Breast epithelium (tissue), 4 donors: ENCODE measurements at regions of chr5 and their contacts with region 1.

Region 1: GRCh38 chr5:106797996-106798395 is 872.7 kb downstream of the EFNA5 start:
- DNase-seq: no peak
- H3K4me3 ChIP-seq: no peak overlapping the region
- H3K27ac ChIP-seq: no peak overlapping the region
- H3K4me1 ChIP-seq: no peaks in the 10 kb centered on the region
- H3K27me3 ChIP-seq: no peaks in the 10 kb centered on the region
- CTCF ChIP-seq: no peak
- POLR2A ChIP-seq: no peak

Region 2: GRCh38 chr5:106367263-106367662 is 430.7 kb before region 1 on chr5:
- intact Hi-C with region 1: no loop called
- DNase-seq: no peak
- H3K4me3 ChIP-seq: no peak overlapping the region
- H3K27ac ChIP-seq: no peak overlapping the region
- H3K4me1 ChIP-seq: no peaks in the 10 kb centered on the region
- H3K27me3 ChIP-seq: no peaks in the 10 kb centered on the region
- CTCF ChIP-seq: no peak
- POLR2A ChIP-seq: no peak

Region 3: DNA sequence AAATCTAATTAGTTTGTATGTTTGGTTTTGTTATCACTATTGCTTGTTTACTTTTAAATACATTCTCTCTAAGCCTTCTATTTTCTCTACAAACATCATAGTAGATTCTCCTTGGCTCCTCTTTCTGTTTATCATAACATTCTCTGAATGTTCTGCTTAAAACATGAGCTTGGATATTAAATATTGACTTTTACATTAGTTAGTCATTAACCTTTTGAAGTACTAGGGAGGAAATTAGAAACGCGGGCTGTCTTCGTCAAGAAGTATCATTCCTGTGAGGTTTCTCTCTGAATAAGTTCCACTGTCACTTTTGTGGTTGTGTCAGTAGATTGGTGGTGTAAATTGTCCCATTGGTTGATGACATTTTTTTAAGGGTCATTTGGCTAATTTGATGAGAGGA is 51.3 kb after region 1 on chr5:
- intact Hi-C with region 1: loop called (anchors 5 kb)
- DNase-seq: no peak
- H3K4me3 ChIP-seq: no peak overlapping the region
- H3K27ac ChIP-seq: no peak overlapping the region
- H3K4me1 ChIP-seq: no peaks in the 10 kb centered on the region
- H3K27me3 ChIP-seq: no peaks in the 10 kb centered on the region
- CTCF ChIP-seq: no peak
- POLR2A ChIP-seq: no peak